Left ventricle myocardium inferior (tissue), 1 donor: ENCODE measurements at regions of chr9 and their contacts with region 1.

Region 1: GRCh38 chr9:21326526-21327139 is 8.6 kb downstream of the KLHL9 start:
- DNase-seq: no peak
- H3K4me3 ChIP-seq: no peak overlapping the region
- H3K27ac ChIP-seq: no peak overlapping the region
- H3K4me1 ChIP-seq: peaks cover 54% of the 10 kb centered on the region
- H3K27me3 ChIP-seq: no peaks in the 10 kb centered on the region
- CTCF ChIP-seq: peak; percentile 81

Region 2: DNA sequence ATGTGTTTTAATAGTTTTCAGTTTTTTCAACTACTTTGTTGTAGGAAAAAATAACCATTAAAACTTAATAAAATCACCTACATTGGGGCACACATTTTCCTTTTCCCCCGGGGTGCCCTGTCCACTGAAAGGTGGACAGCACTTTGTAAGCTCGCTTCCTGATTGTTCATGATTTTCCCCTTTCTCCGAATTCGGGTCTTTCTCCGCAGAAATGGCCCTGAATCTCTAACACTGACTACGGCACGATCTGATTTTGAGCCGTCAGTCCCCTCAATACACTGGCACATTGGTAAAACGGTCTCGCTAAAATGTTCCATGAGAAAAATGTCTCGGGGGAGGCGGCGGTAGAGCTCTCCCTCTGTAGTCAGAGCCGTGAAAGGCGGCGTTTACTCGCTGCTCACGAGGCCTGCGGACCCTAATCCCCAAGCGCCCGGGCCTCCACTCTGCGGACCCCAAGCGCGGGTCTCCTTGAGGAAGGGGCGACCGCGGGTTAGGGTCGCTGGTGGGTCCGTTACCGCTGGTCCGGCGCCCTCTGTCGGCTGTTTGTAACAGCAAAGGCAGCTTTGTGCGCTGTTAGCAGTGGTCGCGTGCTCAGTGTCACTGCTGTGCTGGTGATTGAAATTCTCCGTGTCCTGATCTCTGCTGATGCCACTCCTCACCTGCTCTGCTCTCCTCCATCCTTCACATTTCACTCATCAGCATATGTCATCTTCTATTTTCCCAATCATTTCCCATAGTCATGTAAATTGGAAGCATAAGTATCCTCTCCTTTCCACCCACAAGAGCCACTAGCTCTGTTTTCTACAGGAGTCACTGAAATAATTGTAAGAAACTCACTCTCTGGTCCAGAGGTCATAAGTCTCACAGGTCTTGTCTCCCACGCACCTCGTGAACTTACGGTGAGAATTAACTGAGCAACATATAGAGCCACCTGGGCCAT is 69.4 kb after region 1 on chr9:
- intact Hi-C with region 1: loop called (anchors 5 kb)
- DNase-seq: peak; percentile 45
- H3K4me3 ChIP-seq: peak overlapping the region; percentile 67
- H3K27ac ChIP-seq: no peak overlapping the region
- H3K4me1 ChIP-seq: peaks cover 8% of the 10 kb centered on the region
- H3K27me3 ChIP-seq: peaks cover 98% of the 10 kb centered on the region
- CTCF ChIP-seq: peak; percentile 84

Region 3: GRCh38 chr9:21408817-21409216 is 82.2 kb after region 1 on chr9 and contains the start of gene IFNA8:
- intact Hi-C with region 1: no loop called
- DNase-seq: no peak
- H3K4me3 ChIP-seq: no peak within 1 kb of the TSS
- H3K27ac ChIP-seq: no peak within 1 kb of the TSS
- H3K4me1 ChIP-seq: no peaks in the 10 kb centered on the region
- H3K27me3 ChIP-seq: peaks cover 34% of the 10 kb centered on the region
- CTCF ChIP-seq: no peak
- total RNA-seq, gene IFNA8: not detected